Right ventricle myocardium inferior (tissue), 1 donor: ENCODE measurements at regions of chr7 and their contacts with region 1.

Region 1: GRCh38 chr7:15686295-15686956 is at the start of gene MEOX2:
- DNase-seq: peak; percentile 85
- ATAC-seq: peak; percentile 93
- total RNA-seq, gene MEOX2: 9.0 TPM

Region 2: GRCh38 chr7:15555381-15555859 is 131.0 kb before region 1 on chr7:
- intact Hi-C with region 1: loop called (anchors 5 kb)
- DNase-seq: no peak
- ATAC-seq: no peak

Region 3: DNA sequence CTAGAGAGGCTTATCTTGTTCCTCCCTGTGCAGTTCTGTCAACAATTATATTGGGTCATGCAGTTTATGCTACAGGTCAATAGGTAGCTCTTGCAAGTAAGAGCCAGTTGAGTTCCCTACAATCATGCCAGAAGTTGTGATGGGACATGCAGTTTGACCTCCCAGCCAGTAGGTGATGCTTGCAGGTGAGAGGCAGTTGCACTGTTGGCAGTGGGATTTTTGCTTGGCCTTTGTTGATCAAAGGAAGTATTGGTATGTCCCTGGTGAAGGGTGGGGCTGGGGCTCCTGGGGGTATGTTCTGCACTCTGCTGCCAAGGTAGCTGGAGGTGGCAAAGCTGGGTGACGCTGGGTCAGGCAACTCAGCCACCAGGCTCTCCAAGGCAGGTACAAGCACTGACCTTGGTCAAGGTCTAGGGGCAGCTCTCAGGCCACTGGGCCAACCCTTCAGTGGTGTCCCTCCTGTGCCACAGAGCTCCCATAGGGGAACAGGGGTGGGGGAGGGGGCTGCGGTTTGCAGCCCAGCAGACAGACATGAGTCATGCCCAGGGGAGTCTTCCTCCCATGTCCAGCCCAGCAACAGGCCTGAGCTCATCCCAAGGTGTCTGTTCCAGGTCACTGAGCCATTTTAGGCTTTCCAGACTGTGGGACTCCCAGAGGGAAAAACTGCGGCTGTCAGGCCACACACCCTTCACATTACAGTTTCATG is 43.3 kb before region 1 on chr7:
- intact Hi-C with region 1: no loop called
- DNase-seq: no peak
- ATAC-seq: no peak

Region 4: GRCh38 chr7:15720849-15721471 is 34.5 kb after region 1 on chr7:
- intact Hi-C with region 1: loop called (anchors 5 kb)
- DNase-seq: no peak
- ATAC-seq: no peak

Region 5: GRCh38 chr7:15764851-15765382 is 78.5 kb after region 1 on chr7:
- intact Hi-C with region 1: loop called (anchors 5 kb)
- DNase-seq: no peak
- ATAC-seq: no peak

Region 6: GRCh38 chr7:15839416-15840100 is 153.1 kb after region 1 on chr7:
- intact Hi-C with region 1: loop called (anchors 5 kb)
- DNase-seq: peak; percentile 81
- ATAC-seq: peak; percentile 98

Region 7: GRCh38 chr7:16071246-16071857 is 384.9 kb after region 1 on chr7:
- intact Hi-C with region 1: loop called (anchors 2 kb)
- DNase-seq: no peak
- ATAC-seq: no peak